AG04450 (cell line): ENCODE measurements at regions of chr10 and their contacts with region 1.

Region 1: GRCh38 chr10:73908853-73909538 is 1.9 kb upstream of the PLAU start:
- DNase-seq: peak; percentile 99
- H3K4me3 ChIP-seq: peak overlapping the region; percentile 35; the same call in 1 of the 2 replicates
- H3K27ac ChIP-seq: peak overlapping the region; percentile 100
- H3K27me3 ChIP-seq: no peaks in the 10 kb centered on the region
- CTCF ChIP-seq: no peak

Region 2: GRCh38 chr10:73810735-73811465 is 98.1 kb before region 1 on chr10:
- CTCF ChIA-PET with region 1: no interaction called
- POLR2A ChIA-PET with region 1: no interaction called
- DNase-seq: no peak
- H3K4me3 ChIP-seq: peak overlapping the region; percentile 80
- H3K27ac ChIP-seq: peak overlapping the region; percentile 39
- H3K27me3 ChIP-seq: no peaks in the 10 kb centered on the region
- CTCF ChIP-seq: no peak

Region 3: DNA sequence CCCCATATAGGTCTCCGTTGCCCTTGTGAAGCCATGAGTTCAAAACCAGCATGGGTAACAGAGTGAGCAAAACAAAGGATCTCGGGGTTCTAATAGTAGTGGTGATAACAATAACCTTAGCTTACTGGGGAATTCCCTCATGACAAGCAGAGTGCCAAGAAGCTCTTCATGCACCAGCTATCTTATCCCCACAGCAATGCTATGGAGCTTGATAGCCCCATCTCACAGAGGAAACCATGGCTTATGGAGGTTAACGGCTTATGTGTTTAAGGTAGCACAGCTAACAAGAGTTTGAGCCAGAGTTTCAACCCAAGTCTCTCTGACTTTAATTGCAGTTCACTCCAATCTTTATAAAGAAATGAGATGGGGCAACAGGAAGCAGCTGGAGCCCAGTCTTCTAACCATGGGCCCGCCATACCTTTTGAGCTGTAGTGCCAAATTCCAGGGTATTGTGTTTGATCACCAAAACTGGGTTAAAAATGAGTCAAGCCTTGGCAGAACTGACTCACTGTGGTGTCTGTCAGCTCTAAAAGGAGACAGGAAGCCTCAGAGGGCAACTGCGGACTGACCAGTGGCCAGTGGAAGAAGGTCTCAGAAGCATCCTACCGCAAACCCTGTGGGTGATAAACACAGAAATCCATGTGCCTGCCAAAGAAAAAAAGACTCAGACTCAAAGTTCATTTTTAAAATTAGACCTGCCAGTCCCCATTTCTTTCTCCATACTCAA is 14.6 kb before region 1 on chr10:
- CTCF ChIA-PET with region 1: interaction called, 3 read pairs
- POLR2A ChIA-PET with region 1: interaction called, 81 read pairs
- DNase-seq: no peak
- H3K4me3 ChIP-seq: no peak overlapping the region
- H3K27ac ChIP-seq: peak overlapping the region; percentile 47
- H3K27me3 ChIP-seq: no peaks in the 10 kb centered on the region
- CTCF ChIP-seq: no peak

Region 4: DNA sequence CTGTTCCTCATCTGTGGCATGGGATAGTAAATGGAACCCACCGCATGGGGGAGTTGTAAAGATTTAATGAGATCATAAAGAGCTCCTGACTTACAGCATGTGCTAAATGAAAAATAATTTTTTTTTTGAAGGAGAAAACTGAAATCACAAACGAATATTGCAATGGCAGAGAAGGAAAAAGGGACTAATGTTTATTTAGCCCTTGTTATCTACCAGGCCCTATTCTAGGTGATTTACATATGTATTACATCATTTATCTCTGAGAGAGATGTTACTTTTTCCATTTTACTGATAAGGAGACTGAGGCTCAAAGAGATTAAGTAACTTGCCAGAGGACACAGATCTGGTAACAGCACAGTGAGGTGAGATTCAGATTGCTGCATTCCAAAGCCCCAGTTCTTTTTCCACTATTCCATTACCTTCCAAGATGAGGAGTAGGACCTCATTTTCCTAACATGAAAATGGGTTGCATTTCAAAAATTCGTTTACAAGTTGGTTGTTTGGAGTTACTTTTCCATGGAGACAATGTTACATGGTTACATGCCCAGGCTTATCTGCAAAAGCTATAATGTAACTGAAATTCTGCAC is 117.5 kb after region 1 on chr10:
- CTCF ChIA-PET with region 1: interaction called, 6 read pairs
- POLR2A ChIA-PET with region 1: interaction called, 13 read pairs
- DNase-seq: no peak
- H3K4me3 ChIP-seq: no peak overlapping the region
- H3K27ac ChIP-seq: no peak overlapping the region
- H3K27me3 ChIP-seq: no peaks in the 10 kb centered on the region
- CTCF ChIP-seq: no peak

Region 5: GRCh38 chr10:74039561-74040145 is 130.7 kb after region 1 on chr10:
- CTCF ChIA-PET with region 1: no interaction called
- POLR2A ChIA-PET with region 1: no interaction called
- DNase-seq: no peak
- H3K4me3 ChIP-seq: no peak overlapping the region
- H3K27ac ChIP-seq: peak overlapping the region; percentile 40
- H3K27me3 ChIP-seq: no peaks in the 10 kb centered on the region
- CTCF ChIP-seq: no peak

Region 6: DNA sequence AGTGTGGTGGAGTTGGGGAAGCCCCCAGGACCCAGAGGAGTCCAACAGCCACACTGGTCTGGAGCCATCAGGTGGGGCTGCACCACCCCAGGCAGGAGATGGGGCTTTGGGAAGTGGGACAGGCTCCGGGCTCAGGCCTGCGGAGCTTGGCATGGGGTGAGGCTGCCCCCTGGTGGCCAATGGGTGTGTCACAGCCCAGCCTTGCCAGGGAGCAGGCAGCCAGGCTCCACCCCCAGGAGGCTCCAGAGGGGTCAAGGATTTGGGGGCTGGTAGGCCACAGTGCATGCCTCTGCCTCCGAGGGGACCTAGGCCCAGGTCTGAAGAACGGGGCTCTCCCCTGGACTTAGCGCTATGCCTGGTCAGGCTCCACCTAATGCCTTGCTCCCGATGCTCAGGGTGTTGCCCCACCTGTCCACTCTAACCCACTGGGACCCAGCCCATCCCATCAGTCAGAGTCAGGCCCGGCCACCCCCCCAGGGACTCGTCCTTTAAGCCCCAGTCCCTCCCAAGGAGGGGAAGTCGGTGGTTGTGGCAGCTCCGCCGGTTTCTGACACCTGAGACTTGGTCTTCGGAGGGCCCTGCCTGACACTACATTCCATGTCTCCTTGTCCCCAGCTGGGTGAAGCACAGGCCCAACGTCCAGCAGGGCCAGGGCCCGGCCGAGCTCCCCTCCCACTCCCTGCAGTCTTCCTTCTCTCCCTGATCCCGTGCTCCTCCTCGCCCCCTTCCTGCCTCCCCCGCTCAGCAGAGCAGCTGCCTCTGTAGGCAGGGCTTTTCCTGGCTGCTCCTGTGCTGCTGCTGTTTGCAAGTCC is 1191.2 kb after region 1 on chr10:
- CTCF ChIA-PET with region 1: no interaction called
- POLR2A ChIA-PET with region 1: no interaction called
- DNase-seq: peak; percentile 27
- H3K4me3 ChIP-seq: no peak overlapping the region
- H3K27ac ChIP-seq: no peak overlapping the region
- H3K27me3 ChIP-seq: no peaks in the 10 kb centered on the region
- CTCF ChIP-seq: peak; percentile 97